Endothelial cell of umbilical vein (primary cell): ENCODE measurements at regions of chr10 and their contacts with region 1.

Region 1: GRCh38 chr10:88565072-88565471 is 18.0 kb downstream of the RNLS start:
- DNase-seq: peak; percentile 42
- H3K4me3 ChIP-seq: no peak overlapping the region
- H3K27ac ChIP-seq: no peak overlapping the region
- H3K4me1 ChIP-seq: no peaks in the 10 kb centered on the region
- H3K27me3 ChIP-seq: no peaks in the 10 kb centered on the region
- CTCF ChIP-seq: peak in 1 of 2 donors; percentile 11
- POLR2A ChIP-seq: no peak

Region 2: DNA sequence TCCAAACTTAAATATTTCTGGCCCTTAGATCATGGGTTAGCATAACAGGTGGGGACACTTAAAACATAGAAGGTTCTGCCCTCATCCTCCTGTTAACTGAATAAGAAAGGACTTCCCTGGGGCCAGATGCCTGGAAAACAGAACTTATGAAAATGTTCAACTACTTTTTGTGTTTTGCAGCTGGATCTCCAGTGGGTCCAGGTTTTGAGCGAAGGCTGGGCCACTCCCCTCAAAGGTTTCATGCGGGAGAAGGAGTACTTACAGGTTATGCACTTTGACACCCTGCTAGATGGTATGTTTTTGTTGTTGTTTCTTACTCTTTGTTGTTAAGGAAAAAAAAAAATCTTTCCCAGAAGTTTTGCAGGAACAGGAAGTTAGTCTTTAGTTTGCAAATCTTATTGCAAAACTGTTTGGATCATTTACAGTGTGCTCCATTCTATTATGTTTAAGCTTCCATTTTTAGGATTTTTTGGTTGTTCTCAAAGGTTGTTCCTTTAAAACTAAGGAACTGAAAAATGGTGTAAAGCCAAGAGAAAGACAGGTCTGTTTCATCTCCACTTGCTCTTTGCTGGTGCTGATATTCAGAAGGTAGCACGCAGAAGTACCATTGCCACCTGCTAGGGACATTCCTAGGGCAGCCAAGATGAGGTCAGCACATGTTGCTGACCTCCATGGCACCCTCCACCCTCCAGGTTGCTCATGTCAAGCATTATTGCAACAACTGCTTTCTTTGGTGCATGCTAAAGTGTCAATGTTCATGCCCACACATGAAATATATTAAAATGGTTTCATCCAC is 849.3 kb before region 1 on chr10:
- CTCF ChIA-PET with region 1: no interaction called
- POLR2A ChIA-PET with region 1: no interaction called
- dilution Hi-C with region 1: no loop called
- intact Hi-C with region 1: no loop called
- DNase-seq: no peak
- H3K4me3 ChIP-seq: no peak overlapping the region
- H3K27ac ChIP-seq: peak overlapping the region; percentile 46
- H3K4me1 ChIP-seq: peaks cover 30% of the 10 kb centered on the region
- H3K27me3 ChIP-seq: no peaks in the 10 kb centered on the region
- CTCF ChIP-seq: no peak
- POLR2A ChIP-seq: no peak

Region 3: GRCh38 chr10:88472540-88472939 is 92.5 kb before region 1 on chr10:
- CTCF ChIA-PET with region 1: no interaction called
- POLR2A ChIA-PET with region 1: no interaction called
- dilution Hi-C with region 1: no loop called
- intact Hi-C with region 1: no loop called
- DNase-seq: no peak
- H3K4me3 ChIP-seq: no peak overlapping the region
- H3K27ac ChIP-seq: no peak overlapping the region
- H3K4me1 ChIP-seq: no peaks in the 10 kb centered on the region
- H3K27me3 ChIP-seq: no peaks in the 10 kb centered on the region
- CTCF ChIP-seq: no peak
- POLR2A ChIP-seq: no peak

Region 4: GRCh38 chr10:88525371-88526079 is 39.5 kb before region 1 on chr10:
- CTCF ChIA-PET with region 1: interaction called, 10 read pairs
- POLR2A ChIA-PET with region 1: no interaction called
- dilution Hi-C with region 1: no loop called
- intact Hi-C with region 1: no loop called
- DNase-seq: peak; percentile 86
- H3K4me3 ChIP-seq: no peak overlapping the region
- H3K27ac ChIP-seq: no peak overlapping the region
- H3K4me1 ChIP-seq: peaks cover 8% of the 10 kb centered on the region
- H3K27me3 ChIP-seq: no peaks in the 10 kb centered on the region
- CTCF ChIP-seq: no peak
- POLR2A ChIP-seq: no peak

Region 5: DNA sequence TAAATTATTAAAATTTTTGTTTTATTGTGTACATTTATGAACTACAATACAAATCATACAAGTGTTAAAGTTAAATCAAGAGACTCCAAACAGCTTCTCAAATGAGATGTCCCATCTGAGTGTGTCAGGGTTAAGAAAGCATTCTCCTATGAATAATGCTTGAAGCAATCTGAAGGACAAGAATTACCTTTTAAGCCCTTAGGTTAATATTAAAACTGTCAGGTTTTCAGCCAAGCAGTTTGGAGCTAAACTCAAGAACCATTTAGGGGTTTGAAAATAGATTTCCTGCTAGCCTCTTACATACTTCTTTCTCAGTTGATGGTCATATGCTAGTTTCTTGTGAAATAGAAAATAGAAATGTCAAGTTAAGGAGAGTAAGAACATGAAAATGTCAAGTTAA is 59.8 kb after region 1 on chr10:
- CTCF ChIA-PET with region 1: no interaction called
- POLR2A ChIA-PET with region 1: no interaction called
- dilution Hi-C with region 1: no loop called
- intact Hi-C with region 1: no loop called
- DNase-seq: no peak
- H3K4me3 ChIP-seq: no peak overlapping the region
- H3K27ac ChIP-seq: no peak overlapping the region
- H3K4me1 ChIP-seq: no peaks in the 10 kb centered on the region
- H3K27me3 ChIP-seq: no peaks in the 10 kb centered on the region
- CTCF ChIP-seq: no peak
- POLR2A ChIP-seq: no peak

Region 6: DNA sequence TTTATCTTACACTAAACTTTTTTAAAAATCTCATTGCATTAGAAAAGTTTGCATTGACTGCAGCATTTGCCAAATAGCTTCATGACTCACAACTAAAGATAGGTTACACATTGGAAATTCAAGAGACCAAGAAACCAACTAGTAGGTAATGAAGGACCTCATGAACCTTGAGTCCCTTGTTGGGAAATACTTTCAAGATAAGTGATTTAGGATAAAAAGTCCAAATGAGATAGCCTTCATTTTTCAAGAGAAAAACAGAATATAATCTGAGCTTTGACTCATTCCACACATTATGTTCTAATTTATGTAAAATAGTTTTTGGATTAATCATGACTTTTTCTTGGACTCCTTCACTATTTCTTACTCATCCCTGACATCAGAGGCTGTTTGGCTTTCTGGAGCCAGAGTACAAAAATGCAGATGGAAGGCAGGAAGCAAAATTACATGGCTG is 86.1 kb after region 1 on chr10:
- CTCF ChIA-PET with region 1: interaction called, 10 read pairs
- POLR2A ChIA-PET with region 1: no interaction called
- dilution Hi-C with region 1: no loop called
- intact Hi-C with region 1: no loop called
- DNase-seq: peak; percentile 82
- H3K4me3 ChIP-seq: no peak overlapping the region
- H3K27ac ChIP-seq: peak overlapping the region; percentile 76
- H3K4me1 ChIP-seq: peaks cover 30% of the 10 kb centered on the region
- H3K27me3 ChIP-seq: no peaks in the 10 kb centered on the region
- CTCF ChIP-seq: no peak
- POLR2A ChIP-seq: peak; percentile 21

Region 7: GRCh38 chr10:88693392-88694020 is 128.4 kb after region 1 on chr10:
- CTCF ChIA-PET with region 1: interaction called, 25 read pairs
- POLR2A ChIA-PET with region 1: no interaction called
- dilution Hi-C with region 1: no loop called
- intact Hi-C with region 1: loop called (anchors 1 kb)
- DNase-seq: peak; percentile 30
- H3K4me3 ChIP-seq: no peak overlapping the region
- H3K27ac ChIP-seq: no peak overlapping the region
- H3K4me1 ChIP-seq: no peaks in the 10 kb centered on the region
- H3K27me3 ChIP-seq: no peaks in the 10 kb centered on the region
- CTCF ChIP-seq: peak in 1 of 2 donors; percentile 6
- POLR2A ChIP-seq: no peak

Region 8: DNA sequence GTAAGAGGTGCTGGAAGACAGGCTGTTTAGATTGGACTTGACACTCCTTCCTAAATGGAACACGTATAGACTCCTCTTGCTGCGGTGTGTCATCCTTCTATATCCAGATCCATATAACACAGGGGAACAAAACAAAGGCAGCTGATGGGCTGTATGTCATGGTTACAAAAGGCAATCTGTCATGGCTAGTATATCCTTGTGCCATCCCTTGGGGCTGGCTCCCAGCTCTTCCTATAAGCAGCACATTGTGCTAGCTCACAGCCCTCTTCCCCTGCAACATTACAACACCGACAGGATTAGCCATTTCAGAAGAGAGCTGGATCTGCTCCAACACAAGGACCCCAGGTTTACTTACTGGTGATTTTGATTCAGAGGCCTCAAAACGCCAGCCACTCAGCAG is 156.3 kb after region 1 on chr10:
- CTCF ChIA-PET with region 1: no interaction called
- POLR2A ChIA-PET with region 1: no interaction called
- dilution Hi-C with region 1: no loop called
- intact Hi-C with region 1: no loop called
- DNase-seq: no peak
- H3K4me3 ChIP-seq: no peak overlapping the region
- H3K27ac ChIP-seq: no peak overlapping the region
- H3K4me1 ChIP-seq: no peaks in the 10 kb centered on the region
- H3K27me3 ChIP-seq: peaks cover 3 to 8% of the 10 kb centered on the region in 2 experiments
- CTCF ChIP-seq: no peak
- POLR2A ChIP-seq: no peak

Region 9: DNA sequence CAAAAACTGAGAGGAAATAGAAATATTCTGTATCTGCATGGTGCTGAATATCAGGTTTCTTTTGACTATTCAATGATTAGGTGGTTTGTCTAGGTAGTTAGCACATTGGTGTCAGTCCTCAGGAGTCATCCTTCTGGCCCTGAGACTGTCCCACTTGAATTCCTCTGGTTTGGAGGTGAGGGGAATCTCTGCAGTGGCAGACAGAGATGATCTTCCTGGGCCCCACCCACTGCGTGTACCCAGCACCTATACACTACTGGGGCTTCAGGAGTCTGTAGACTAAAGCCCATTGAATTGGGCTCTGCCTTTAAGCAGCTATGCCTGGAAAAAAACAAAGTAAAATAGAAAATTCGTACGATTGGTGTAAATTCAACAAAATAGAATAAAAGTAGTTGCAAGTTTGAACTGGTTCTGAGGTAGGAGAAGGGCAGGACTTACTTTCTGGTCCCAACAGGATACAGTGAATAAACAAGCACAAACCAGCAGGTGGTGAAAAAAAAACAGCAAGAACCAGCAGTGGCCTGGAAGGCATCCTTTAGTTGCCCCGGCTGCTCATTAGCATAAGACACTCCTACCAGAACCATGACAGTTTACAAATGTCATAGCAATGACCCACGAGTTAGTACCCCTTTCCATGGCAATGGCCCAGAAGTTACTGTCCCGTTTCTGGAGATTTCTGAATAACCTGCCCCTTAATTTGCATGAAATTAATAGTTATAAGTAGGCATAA is 239.2 kb after region 1 on chr10:
- CTCF ChIA-PET with region 1: interaction called, 164 read pairs
- POLR2A ChIA-PET with region 1: no interaction called
- dilution Hi-C with region 1: no loop called
- intact Hi-C with region 1: no loop called
- DNase-seq: no peak
- H3K4me3 ChIP-seq: no peak overlapping the region
- H3K27ac ChIP-seq: no peak overlapping the region
- H3K4me1 ChIP-seq: peaks cover 3% of the 10 kb centered on the region
- H3K27me3 ChIP-seq: no peaks in the 10 kb centered on the region
- CTCF ChIP-seq: no peak
- POLR2A ChIP-seq: no peak

Region 10: GRCh38 chr10:88835096-88835909 is 270.2 kb after region 1 on chr10:
- CTCF ChIA-PET with region 1: interaction called, 80 read pairs
- POLR2A ChIA-PET with region 1: no interaction called
- dilution Hi-C with region 1: no loop called
- intact Hi-C with region 1: no loop called
- DNase-seq: peak; percentile 85
- H3K4me3 ChIP-seq: no peak overlapping the region
- H3K27ac ChIP-seq: no peak overlapping the region
- H3K4me1 ChIP-seq: no peaks in the 10 kb centered on the region
- H3K27me3 ChIP-seq: peaks cover 0 to 2% of the 10 kb centered on the region in 2 experiments
- CTCF ChIP-seq: peak; percentile 83 to 88
- POLR2A ChIP-seq: no peak